ENCODE measurements at regions of chrX and their contacts with region 1.

Region 1: DNA sequence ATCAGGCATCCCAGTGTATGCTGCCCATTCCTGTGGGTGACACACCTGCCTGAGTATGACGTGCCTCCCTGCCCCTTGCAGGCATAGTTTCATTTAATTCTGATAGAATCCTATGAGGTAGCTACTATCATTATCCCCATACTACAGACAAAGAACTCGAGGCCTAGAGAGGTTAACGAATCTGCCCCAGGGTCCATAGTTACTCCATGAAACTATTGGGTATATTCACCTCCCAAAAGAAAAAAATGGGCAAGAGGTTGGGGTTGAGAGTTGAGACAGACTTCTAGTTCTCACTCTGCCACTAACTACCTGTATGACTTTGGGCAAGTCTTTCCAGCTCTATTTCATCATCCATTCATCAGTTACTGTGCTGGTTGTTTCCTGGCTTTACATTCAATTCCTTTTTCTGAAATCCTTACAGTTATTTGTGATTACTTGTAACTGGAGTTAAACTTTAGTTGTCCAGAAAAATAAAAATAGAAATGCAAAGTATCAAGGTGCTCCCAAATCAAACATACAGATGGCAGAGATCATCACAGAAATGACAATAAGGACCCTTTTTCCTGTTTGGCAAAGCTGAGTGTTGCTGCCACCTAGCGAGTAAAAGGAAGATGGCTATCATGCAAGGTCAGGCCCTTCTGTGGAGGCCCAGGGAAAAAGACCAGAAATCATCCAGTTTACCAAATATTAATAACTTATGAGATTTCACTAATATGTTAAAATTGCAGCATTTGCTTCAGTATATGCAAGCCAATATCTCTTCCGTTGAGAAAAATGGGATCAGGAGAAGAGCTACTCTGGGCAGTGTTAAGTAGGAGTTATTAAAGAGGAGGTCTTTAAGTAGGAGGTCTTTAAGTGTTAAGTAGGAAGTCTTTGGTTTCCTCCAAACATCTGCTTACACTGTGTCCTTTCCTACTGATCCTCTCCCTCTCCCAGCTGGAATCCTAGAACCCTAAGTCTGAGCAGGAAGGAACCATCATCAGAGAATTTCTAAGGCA is 17.1 kb upstream of the MAP7D3 start:
- DNase-seq: peak; percentile 64
- ATAC-seq: peak; percentile 61
- H3K4me3 Mint-ChIP-seq: no peak overlapping the region
- H3K27ac Mint-ChIP-seq: no peak overlapping the region
- H3K4me1 Mint-ChIP-seq: peaks cover 3% of the 10 kb centered on the region
- H3K27me3 Mint-ChIP-seq: no peaks in the 10 kb centered on the region
- CTCF ChIP-seq: peak; percentile 71

Region 2: DNA sequence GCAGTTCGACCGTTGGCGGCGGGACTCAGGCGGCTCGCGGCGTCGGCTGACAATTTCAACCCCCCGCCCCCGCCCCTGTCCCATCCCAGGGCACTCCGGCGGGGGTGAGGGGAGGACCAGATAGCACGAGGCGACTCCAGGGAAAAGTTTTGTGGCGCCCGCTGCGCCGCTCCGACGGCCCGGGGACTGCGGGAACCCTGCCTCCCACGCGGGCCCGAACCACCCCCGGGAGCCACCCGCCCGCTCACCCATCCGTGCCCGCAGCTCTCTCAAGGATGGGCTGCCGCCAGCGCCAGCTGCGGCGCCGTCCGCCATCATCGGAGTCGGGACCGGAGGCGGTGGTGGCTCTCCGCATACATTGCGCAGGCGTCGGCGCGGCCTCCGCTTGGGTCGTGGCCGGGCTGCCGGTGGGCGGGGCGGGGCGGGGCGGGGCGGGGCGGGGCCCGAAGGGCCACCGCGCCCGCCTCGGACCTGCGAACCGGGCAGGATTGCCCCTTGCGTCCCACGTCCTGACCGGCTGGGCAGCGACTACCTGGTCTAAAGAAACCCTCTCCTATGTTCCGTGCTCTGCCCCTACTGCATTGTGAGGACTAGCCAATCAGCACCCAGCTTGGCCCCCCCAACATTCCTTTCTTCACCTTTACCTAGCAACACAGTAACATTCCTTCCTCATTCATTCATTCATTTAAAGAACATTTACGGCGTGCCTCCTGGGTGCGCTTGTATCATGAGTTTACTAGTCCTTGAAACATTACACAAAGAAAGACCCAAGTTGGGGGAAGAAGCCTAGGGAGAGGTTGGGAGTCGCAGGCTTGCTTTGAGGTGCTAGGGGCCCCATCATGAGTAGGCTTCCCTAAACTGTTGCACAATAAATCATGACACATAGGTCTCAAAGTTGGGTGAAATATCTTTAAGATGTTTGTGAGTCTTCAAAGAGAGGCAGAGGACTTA is 17.0 kb before region 1 on chrX and contains the start of gene MAP7D3:
- CTCF ChIA-PET with region 1: interaction called, 11 read pairs
- POLR2A ChIA-PET with region 1: no interaction called
- intact Hi-C with region 1: no loop called
- DNase-seq: peak; percentile 70
- ATAC-seq: peak; percentile 92
- H3K4me3 Mint-ChIP-seq: peak within 1 kb of the TSS; percentile 75
- H3K27ac Mint-ChIP-seq: peak within 1 kb of the TSS; percentile 67
- H3K4me1 Mint-ChIP-seq: peaks cover 12% of the 10 kb centered on the region
- H3K27me3 Mint-ChIP-seq: no peaks in the 10 kb centered on the region
- CTCF ChIP-seq: no peak
- total RNA-seq, gene MAP7D3: 13.4 to 14.2 TPM

Region 3: GRCh38 chrX:136546371-136546781 is 278.0 kb after region 1 on chrX:
- CTCF ChIA-PET with region 1: no interaction called
- POLR2A ChIA-PET with region 1: no interaction called
- intact Hi-C with region 1: no loop called
- DNase-seq: peak; percentile 43
- ATAC-seq: peak; percentile 86
- H3K4me3 Mint-ChIP-seq: no peak overlapping the region
- H3K27ac Mint-ChIP-seq: peak overlapping the region; percentile 66
- H3K4me1 Mint-ChIP-seq: peaks cover 38% of the 10 kb centered on the region
- H3K27me3 Mint-ChIP-seq: no peaks in the 10 kb centered on the region
- CTCF ChIP-seq: no peak

Region 4: DNA sequence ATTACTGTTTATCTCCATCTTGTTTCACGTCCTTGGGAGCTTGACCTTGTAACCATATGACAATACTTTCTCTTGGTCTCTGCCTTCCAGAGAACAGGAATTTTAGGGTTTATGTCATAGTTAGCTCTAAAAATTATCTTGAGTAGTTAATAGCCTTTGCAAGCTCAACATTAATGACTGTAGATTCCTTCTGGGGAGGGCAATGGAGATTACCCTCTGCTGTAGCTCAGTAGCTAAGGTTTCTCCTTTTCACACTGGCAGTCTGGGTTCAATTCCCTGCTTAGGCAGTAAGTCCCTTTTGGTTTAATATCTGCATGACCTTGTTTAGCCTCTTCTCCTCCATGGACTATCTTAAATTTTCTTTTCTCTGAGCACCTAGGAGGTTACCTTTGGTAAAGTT is 947.1 kb after region 1 on chrX:
- CTCF ChIA-PET with region 1: no interaction called
- POLR2A ChIA-PET with region 1: no interaction called
- intact Hi-C with region 1: no loop called
- DNase-seq: no peak
- ATAC-seq: no peak
- H3K4me3 Mint-ChIP-seq: no peak overlapping the region
- H3K27ac Mint-ChIP-seq: no peak overlapping the region
- H3K4me1 Mint-ChIP-seq: no peaks in the 10 kb centered on the region
- H3K27me3 Mint-ChIP-seq: no peaks in the 10 kb centered on the region
- CTCF ChIP-seq: no peak